Esophagus squamous epithelium (tissue), 5 donors: ENCODE measurements at regions of chr14 and their contacts with region 1.

Region 1: GRCh38 chr14:32076278-32077080 is 625 bp upstream of the ARHGAP5 start:
- DNase-seq: peak; percentile 56
- H3K4me3 ChIP-seq: peak overlapping the region; percentile 70 to 99 (median 96)
- H3K27ac ChIP-seq: peak overlapping the region; percentile 99 to 100 (median 99)
- H3K4me1 ChIP-seq: peaks cover 0 to 64% (median 20%) of the 10 kb centered on the region in 3 donors
- H3K27me3 ChIP-seq: no peaks in the 10 kb centered on the region
- CTCF ChIP-seq: no peak
- POLR2A ChIP-seq: peak in 2 of 4 donors; percentile 55 to 72

Region 2: GRCh38 chr14:32202998-32203882 is 126.8 kb after region 1 on chr14 and contains the start of gene RNU6-8:
- intact Hi-C with region 1: loop called (anchors 5 kb)
- DNase-seq: peak; percentile 24
- H3K4me3 ChIP-seq: peak within 1 kb of the TSS; percentile 50 to 82 (median 66)
- H3K27ac ChIP-seq: peak within 1 kb of the TSS; percentile 86 to 92 (median 88)
- H3K4me1 ChIP-seq: peaks cover 0 to 47% (median 6%) of the 10 kb centered on the region in 3 donors
- H3K27me3 ChIP-seq: no peaks in the 10 kb centered on the region
- CTCF ChIP-seq: no peak
- POLR2A ChIP-seq: peak in 2 of 4 donors; percentile 46 to 51
- total RNA-seq, gene RNU6-8: not detected

Region 3: DNA sequence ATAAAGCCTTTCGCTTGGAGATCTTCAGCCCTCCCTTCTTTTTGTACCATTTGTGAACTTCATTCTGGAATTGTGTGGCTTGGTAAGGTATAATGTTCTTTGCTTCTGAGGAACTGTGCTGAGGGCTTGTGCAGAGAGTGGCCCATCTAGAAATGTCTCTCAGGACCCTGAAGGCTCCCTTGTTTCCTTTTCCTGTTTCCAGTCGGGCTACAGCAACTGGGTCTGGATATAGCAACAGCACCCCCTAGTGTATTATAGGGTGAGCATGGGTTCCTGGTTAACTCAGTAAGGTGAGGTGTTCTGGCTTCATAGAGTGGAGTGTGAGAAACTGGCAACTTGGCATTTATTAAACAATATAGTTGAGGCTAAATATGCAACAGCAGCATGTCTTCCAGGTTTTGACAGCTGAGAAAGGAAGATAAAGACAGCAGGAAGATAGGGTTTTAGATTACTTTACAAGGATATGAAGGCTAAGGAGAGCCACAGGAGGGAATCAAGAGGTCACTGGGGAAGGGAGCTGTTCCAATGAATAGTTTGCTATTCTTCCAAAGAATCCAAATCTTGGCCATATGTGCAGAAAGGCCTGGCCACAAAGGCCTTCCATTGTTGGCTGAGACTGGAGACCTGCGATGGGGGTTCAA is 175.7 kb after region 1 on chr14:
- intact Hi-C with region 1: loop called (anchors 5 kb)
- DNase-seq: no peak
- H3K4me3 ChIP-seq: no peak overlapping the region
- H3K27ac ChIP-seq: peak overlapping the region in 2 of 4 donors; percentile 23 to 69
- H3K4me1 ChIP-seq: peaks cover 0 to 25% (median 12%) of the 10 kb centered on the region in 3 donors
- H3K27me3 ChIP-seq: no peaks in the 10 kb centered on the region
- CTCF ChIP-seq: peak; percentile 52 to 89 (median 85)
- POLR2A ChIP-seq: no peak